ENCODE measurements at regions of chr2 and their contacts with region 1.

Region 1: DNA sequence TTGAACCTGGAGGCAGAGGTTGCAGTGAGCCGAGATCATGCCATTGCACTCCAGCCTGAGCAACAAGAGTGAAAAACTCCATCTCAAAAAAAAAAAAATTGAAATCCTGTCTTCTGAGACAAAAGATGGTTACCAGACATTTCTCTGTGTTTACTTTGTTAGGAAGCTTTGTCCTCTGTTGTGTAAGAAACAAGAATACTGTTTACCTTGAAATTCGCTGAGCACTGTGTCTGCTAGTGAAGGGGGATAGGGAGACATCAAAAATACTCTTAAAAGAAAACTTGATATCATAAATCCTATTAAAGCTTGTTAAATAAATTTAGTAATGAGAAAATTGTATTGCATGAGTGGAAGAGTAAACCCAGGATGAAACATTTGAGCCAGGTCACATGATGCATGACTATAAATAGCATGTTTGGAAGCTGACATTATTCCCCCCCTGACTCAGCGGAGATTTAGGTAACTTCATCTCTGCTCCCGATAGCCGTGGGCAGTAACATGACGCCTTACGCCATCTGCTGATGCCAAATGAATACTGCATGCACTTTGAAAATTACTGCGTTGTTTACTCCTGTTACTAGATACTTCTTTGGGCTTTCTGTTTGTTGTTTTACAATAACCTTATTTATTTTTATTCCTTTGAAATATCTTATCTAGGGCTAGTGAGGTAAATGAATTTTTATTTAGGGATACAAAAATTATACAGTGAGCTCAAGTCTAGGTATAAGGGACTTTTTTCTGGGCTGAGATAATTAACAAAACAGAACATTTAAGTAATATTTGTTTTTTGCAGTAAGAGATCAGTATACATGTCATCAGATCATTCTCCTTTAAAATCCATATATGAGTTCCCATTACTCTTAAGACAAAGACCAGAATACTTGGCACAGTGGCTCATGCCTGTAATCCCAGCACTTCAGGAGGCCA is 134.9 kb downstream of the MAP3K20 start:
- DNase-seq: peak; percentile 74
- H3K4me3 ChIP-seq: no peak overlapping the region
- H3K27ac ChIP-seq: no peak overlapping the region
- H3K4me1 ChIP-seq: no peaks in the 10 kb centered on the region
- H3K27me3 ChIP-seq: no peaks in the 10 kb centered on the region
- CTCF ChIP-seq: peak; percentile 82

Region 2: GRCh38 chr2:172970660-172971059 is 239.9 kb before region 1 on chr2:
- intact Hi-C with region 1: loop called (anchors 2 kb)
- DNase-seq: no peak
- H3K4me3 ChIP-seq: no peak overlapping the region
- H3K27ac ChIP-seq: no peak overlapping the region
- H3K4me1 ChIP-seq: no peaks in the 10 kb centered on the region
- H3K27me3 ChIP-seq: no peaks in the 10 kb centered on the region
- CTCF ChIP-seq: no peak